B cell (primary cell): ENCODE measurements at regions of chr14 and their contacts with region 1.

Region 1: GRCh38 chr14:24075485-24076301 is 4.3 kb downstream of the CPNE6 start:
- DNase-seq: peak; percentile 51
- ATAC-seq: peak; percentile 68
- H3K4me3 ChIP-seq: peak overlapping the region in 1 of 5 experiments; percentile 22
- H3K4me3 Mint-ChIP-seq: peak overlapping the region; percentile 38
- H3K27ac ChIP-seq: peak overlapping the region in 1 of 2 donors; percentile 25
- H3K27ac Mint-ChIP-seq: peak overlapping the region; percentile 81
- H3K4me1 ChIP-seq: peaks cover 24 to 29% of the 10 kb centered on the region in 2 donors
- H3K4me1 Mint-ChIP-seq: peaks cover 33% of the 10 kb centered on the region
- H3K27me3 ChIP-seq: peaks cover 0 to 4% (median 0%) of the 10 kb centered on the region in 4 experiments
- H3K27me3 Mint-ChIP-seq: peaks cover 4% of the 10 kb centered on the region
- CTCF ChIP-seq: no peak

Region 2: DNA sequence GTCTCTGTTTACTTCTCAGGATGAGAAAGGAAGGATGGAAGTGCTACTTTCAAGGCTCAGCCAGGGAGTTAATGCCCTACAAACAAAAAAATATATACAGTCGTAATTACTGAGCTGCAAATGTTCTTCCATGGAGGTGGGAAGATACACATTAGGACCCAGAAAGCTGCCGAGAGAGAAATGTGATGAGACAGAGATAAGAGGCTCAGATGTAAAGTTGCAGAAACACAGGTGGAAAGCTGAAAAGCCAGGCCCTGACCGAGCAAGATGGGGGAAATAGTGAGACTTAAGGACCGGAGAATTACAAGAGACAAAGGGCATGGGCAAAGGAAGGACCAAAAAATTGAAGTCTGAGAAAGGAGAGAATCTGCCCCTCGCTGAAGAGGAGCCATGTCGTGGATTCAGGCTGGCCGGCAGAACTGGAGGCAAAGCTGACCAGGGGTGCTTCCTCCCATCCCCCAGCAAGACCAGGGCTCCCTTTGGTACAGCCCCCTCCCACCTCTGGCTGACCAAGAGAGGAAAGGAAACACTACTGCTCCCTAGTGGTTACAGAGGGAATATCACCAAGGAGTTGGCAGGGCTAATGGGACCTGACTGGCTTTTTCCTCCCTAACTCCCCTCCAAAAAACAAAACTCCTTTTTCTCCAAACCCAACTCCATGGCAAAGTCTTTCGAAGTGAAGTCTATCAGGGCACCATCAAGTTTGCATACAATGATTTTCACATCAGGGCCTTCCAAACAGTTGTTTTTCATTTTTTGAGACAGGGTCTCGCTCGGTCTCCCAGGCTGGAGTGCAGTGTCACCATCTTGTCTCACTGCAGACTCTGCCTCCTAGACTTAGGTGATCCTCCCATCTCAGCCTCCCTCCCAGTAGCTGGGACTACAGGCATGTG is 536.2 kb before region 1 on chr14:
- CTCF ChIA-PET with region 1: no interaction called
- POLR2A ChIA-PET with region 1: no interaction called
- intact Hi-C with region 1: no loop called
- DNase-seq: peak; percentile 55
- ATAC-seq: peak; percentile 74
- H3K4me3 ChIP-seq: no peak overlapping the region
- H3K4me3 Mint-ChIP-seq: no peak overlapping the region
- H3K27ac ChIP-seq: no peak overlapping the region
- H3K27ac Mint-ChIP-seq: no peak overlapping the region
- H3K4me1 ChIP-seq: no peaks in the 10 kb centered on the region
- H3K4me1 Mint-ChIP-seq: no peaks in the 10 kb centered on the region
- H3K27me3 ChIP-seq: peaks cover 0 to 5% (median 0%) of the 10 kb centered on the region in 4 experiments
- H3K27me3 Mint-ChIP-seq: peaks cover 3% of the 10 kb centered on the region
- CTCF ChIP-seq: peak; percentile 78

Region 3: GRCh38 chr14:24058260-24058950 is 17.3 kb before region 1 on chr14:
- CTCF ChIA-PET with region 1: interaction called, 37 read pairs
- POLR2A ChIA-PET with region 1: interaction called, 5 read pairs
- intact Hi-C with region 1: no loop called
- DNase-seq: no peak
- ATAC-seq: peak; percentile 68
- H3K4me3 ChIP-seq: no peak overlapping the region
- H3K4me3 Mint-ChIP-seq: no peak overlapping the region
- H3K27ac ChIP-seq: no peak overlapping the region
- H3K27ac Mint-ChIP-seq: no peak overlapping the region
- H3K4me1 ChIP-seq: no peaks in the 10 kb centered on the region
- H3K4me1 Mint-ChIP-seq: peaks cover 1% of the 10 kb centered on the region
- H3K27me3 ChIP-seq: peaks cover 0 to 26% (median 5%) of the 10 kb centered on the region in 4 experiments
- H3K27me3 Mint-ChIP-seq: no peaks in the 10 kb centered on the region
- CTCF ChIP-seq: peak; percentile 75

Region 4: GRCh38 chr14:24215495-24216344 is 140.0 kb after region 1 on chr14 and contains the start of gene MDP1:
- CTCF ChIA-PET with region 1: no interaction called
- POLR2A ChIA-PET with region 1: no interaction called
- intact Hi-C with region 1: no loop called
- DNase-seq: peak; percentile 94
- ATAC-seq: peak; percentile 75
- H3K4me3 ChIP-seq: peak within 1 kb of the TSS; percentile 88 to 99 (median 96)
- H3K4me3 Mint-ChIP-seq: peak within 1 kb of the TSS; percentile 93
- H3K27ac ChIP-seq: peak within 1 kb of the TSS; percentile 89 to 98
- H3K27ac Mint-ChIP-seq: peak within 1 kb of the TSS; percentile 96
- H3K4me1 ChIP-seq: peaks cover 32 to 33% of the 10 kb centered on the region in 2 donors
- H3K4me1 Mint-ChIP-seq: peaks cover 38% of the 10 kb centered on the region
- H3K27me3 ChIP-seq: no peaks in the 10 kb centered on the region
- H3K27me3 Mint-ChIP-seq: no peaks in the 10 kb centered on the region
- CTCF ChIP-seq: peak; percentile 80
- total RNA-seq, gene MDP1: 11.3 and 17.0 TPM in 2 replicates